Activated CD8-positive, alpha-beta memory T cell treated with anti-CD3 and anti-CD28 coated beads, Interleukin-2, amount 10 ng/mL, durations not matched to agents 7 days and 5 days (primary cell): ENCODE measurements at regions of chr16 and their contacts with region 1.

Region 1: DNA sequence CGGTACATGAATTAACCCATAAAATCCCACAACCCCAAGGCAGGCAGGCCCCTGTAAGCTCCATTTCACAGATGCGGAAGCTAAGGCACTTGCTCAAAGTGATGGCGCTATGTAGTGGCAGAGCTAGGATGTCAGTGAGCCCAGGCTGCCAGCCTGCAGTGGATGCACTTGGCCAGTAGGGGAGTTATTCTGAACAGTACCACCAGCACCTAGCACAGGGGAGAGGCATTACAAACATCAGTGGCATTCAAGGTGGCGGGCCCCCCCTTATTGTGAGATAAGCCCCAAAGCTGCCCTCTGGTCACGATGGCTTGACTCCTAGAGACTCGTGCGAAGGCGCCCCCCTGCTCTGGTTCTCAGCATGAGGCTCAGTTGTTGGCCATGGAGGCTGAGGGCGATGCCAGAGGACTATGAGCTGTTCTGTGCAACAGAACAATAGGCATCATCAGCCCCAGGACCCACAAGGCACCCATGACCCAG is 33.8 kb downstream of the GTF3C1 start:
- DNase-seq: peak; percentile 45
- ATAC-seq: peak; percentile 73
- H3K4me3 Mint-ChIP-seq: no peak overlapping the region
- H3K27ac Mint-ChIP-seq: no peak overlapping the region
- H3K4me1 Mint-ChIP-seq: no peaks in the 10 kb centered on the region
- H3K27me3 Mint-ChIP-seq: no peaks in the 10 kb centered on the region

Region 2: DNA sequence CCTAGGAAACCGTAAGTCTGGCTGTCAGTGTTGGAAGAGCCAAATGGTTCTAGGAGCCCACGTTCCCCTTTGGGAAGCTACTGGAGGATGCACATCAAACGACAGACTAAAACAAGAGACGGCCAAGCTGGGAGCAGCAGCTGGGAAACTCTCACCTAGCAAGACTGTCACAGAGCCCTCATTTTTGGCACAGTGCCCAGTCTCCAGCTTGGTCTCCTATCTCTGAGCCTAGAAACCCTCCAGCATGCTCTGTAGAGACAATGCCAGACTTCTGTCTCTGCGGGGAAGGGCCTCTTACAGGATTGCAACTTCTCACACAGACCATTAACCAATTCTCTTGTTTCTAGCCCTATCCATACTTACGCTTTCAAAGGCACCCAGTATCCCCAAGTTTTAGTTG is 10.3 kb after region 1 on chr16:
- CTCF ChIA-PET with region 1: interaction called, 10 read pairs
- DNase-seq: no peak
- ATAC-seq: no peak
- H3K4me3 Mint-ChIP-seq: no peak overlapping the region
- H3K27ac Mint-ChIP-seq: no peak overlapping the region
- H3K4me1 Mint-ChIP-seq: peaks cover 1% of the 10 kb centered on the region
- H3K27me3 Mint-ChIP-seq: no peaks in the 10 kb centered on the region